ENCODE measurements at regions of chr5 and their contacts with region 1.

Region 1: DNA sequence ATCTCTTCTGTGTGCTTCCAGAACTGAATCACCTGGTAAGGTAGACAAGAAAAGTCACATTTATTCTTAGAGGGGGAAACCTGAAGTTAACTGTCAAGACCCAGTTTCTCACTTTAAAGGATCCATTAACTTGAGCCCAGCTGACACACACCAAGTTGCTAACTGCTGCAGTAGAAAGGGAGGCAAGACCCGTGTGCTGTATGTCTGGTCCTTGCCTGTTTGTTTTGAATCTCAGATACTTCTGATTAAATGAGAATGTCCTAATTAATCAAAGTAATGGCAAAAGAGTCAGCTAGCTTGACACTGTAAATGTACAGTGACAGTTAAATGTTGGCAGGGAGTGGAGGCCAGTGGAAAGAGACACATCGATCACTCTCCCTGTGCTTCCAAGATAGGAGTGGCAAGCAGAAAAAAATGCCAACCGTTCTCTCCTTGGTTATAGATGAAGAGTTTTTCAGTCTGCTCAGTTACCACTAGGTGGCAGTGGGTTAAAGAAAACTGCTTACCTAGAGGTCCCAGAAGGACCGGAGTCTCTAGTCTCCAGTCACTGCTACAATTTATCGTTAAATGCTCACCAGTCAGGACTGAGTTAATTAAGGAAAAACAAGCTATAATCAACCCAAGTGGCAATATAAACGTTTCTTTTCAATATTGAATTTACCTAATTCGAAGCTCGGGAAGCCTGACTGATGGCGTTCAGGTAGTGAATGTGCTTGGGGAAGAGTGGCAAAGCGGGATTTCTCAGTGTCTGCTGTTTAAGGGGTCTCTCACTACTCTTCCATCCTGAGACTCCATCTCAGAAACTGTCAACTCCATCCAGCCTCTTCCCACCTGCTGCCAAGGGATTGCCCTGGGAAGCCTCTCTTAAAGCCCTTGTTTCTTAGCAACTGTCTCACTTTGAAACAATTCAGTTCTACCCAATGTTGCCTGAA is 18.4 kb downstream of the LSM11 start:
- DNase-seq: peak; percentile 63
- ATAC-seq: peak; percentile 76
- H3K4me3 ChIP-seq: no peak overlapping the region
- H3K4me3 Mint-ChIP-seq: no peak overlapping the region
- H3K27ac ChIP-seq: no peak overlapping the region
- H3K27ac Mint-ChIP-seq: no peak overlapping the region
- H3K4me1 ChIP-seq: peaks cover 0 to 4% of the 10 kb centered on the region in 2 donors
- H3K4me1 Mint-ChIP-seq: no peaks in the 10 kb centered on the region
- H3K27me3 ChIP-seq: no peaks in the 10 kb centered on the region
- H3K27me3 Mint-ChIP-seq: no peaks in the 10 kb centered on the region
- CTCF ChIP-seq: peak; percentile 82

Region 2: GRCh38 chr5:157748760-157749461 is 13.0 kb before region 1 on chr5:
- CTCF ChIA-PET with region 1: interaction called, 13 read pairs
- POLR2A ChIA-PET with region 1: no interaction called
- intact Hi-C with region 1: no loop called
- DNase-seq: no peak
- ATAC-seq: no peak
- H3K4me3 ChIP-seq: no peak overlapping the region
- H3K4me3 Mint-ChIP-seq: no peak overlapping the region
- H3K27ac ChIP-seq: no peak overlapping the region
- H3K27ac Mint-ChIP-seq: no peak overlapping the region
- H3K4me1 ChIP-seq: peaks cover 8% of the 10 kb centered on the region in 2 donors
- H3K4me1 Mint-ChIP-seq: peaks cover 14% of the 10 kb centered on the region
- H3K27me3 ChIP-seq: no peaks in the 10 kb centered on the region
- H3K27me3 Mint-ChIP-seq: no peaks in the 10 kb centered on the region
- CTCF ChIP-seq: no peak

Region 3: GRCh38 chr5:157778121-157778805 is 16.3 kb after region 1 on chr5:
- CTCF ChIA-PET with region 1: interaction called, 15 read pairs
- POLR2A ChIA-PET with region 1: no interaction called
- intact Hi-C with region 1: no loop called
- DNase-seq: no peak
- ATAC-seq: no peak
- H3K4me3 ChIP-seq: no peak overlapping the region
- H3K4me3 Mint-ChIP-seq: no peak overlapping the region
- H3K27ac ChIP-seq: no peak overlapping the region
- H3K27ac Mint-ChIP-seq: no peak overlapping the region
- H3K4me1 ChIP-seq: no peaks in the 10 kb centered on the region
- H3K4me1 Mint-ChIP-seq: no peaks in the 10 kb centered on the region
- H3K27me3 ChIP-seq: peaks cover 0 to 2% (median 0%) of the 10 kb centered on the region in 4 experiments
- H3K27me3 Mint-ChIP-seq: peaks cover 2% of the 10 kb centered on the region
- CTCF ChIP-seq: no peak

Measured in B cell (primary cell).